ENCODE measurements at regions of chr7 and their contacts with region 1.

Region 1: DNA sequence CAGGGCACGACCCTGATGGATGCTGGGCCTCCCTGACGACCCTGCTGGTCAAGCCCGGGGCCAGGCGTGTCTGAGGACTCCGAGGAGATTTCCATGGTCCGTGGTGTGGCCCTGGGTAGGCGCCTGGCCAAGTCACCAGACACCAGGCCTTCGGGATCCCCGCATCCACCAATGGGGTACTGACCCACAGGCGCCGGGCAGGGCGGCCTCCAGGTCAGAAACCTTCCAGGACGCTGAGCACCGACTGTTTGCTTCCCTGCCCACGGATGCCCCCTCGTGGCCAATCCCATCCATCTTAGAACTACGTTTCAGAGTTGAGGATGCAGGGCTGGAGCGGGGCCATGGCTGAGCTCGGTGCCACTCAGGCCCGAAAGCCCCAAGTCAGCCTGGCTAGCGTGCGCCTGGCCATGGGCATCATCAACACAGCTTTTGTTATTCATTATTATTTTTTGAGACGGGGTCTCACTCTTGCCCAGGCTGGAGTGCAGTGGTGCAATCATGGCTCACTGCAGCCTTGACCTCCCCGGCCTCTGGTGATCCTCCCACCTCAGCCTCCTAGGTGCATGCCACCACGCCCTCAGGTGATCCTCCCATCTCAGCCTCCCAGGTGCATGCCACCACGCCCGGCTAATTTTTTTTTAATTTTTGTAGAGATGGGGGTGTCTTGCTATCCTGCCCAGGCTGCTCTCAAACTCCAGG is 7.1 kb upstream of the AMZ1 start:
- DNase-seq: peak in 3 of 4 donors; percentile 62 to 93 (median 83)
- ATAC-seq: peak; percentile 91
- H3K4me3 ChIP-seq: no peak overlapping the region
- H3K27ac ChIP-seq: no peak overlapping the region
- H3K4me1 ChIP-seq: peaks cover 0 to 5% of the 10 kb centered on the region in 2 donors
- H3K27me3 ChIP-seq: peaks cover 0 to 61% of the 10 kb centered on the region in 2 donors
- CTCF ChIP-seq: peak; percentile 70 to 80

Region 2: DNA sequence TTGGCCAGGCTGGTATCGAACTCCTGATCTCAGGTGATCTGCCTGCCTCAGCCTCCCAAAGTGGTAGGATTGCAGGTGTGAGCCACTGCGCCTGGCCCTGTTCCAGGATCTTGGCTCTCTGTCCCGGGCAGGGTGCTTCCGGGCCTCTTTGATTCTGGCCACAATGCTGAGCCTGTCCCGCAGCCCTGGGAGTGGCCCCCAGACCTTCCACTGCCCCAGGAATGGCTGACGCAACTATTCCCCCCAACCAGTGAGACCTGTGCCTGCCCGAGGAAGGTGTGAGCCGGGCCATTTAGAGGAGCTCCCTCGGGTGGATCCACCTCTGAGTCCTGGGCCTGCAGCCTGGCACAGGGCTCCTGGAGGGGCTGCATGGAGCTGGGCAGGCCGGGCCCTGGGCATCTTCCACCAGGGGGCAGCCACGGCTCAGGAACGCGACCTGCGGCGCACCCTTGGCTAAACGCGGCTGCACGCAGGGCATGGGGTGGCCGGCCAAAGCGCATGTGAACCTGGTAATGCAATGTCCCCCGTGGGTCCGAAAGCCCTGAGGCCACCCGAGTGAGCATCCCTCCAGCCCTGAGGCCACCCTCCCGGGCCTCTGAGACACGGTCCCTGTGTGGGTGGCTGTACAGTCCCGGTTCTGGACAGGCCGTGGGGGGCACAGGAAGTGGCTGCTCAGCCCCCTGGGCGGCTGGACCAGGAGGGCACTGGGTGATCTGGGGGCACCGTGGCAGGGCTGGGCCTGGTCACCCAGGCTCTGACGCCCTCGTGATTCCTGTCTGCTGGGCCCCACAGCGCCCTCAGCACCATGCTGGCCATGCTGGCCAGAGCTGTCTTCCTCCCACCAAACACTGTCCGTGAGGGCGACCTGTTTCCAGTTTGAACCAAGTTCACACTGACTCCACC is 229.5 kb before region 1 on chr7:
- intact Hi-C with region 1: loop called in 1 of 2 experiments (anchors 10 kb)
- DNase-seq: peak; percentile 67 to 98 (median 86)
- ATAC-seq: peak; percentile 98
- H3K4me3 ChIP-seq: peak overlapping the region; percentile 10 to 26
- H3K27ac ChIP-seq: no peak overlapping the region
- H3K4me1 ChIP-seq: peaks cover 7 to 22% of the 10 kb centered on the region in 2 donors
- H3K27me3 ChIP-seq: no peaks in the 10 kb centered on the region
- CTCF ChIP-seq: peak; percentile 90 to 95

Region 3: GRCh38 chr7:2567679-2568278 is 113.2 kb before region 1 on chr7:
- intact Hi-C with region 1: loop called in 1 of 2 experiments (anchors 10 kb)
- DNase-seq: peak in 2 of 4 donors; percentile 60 to 63
- ATAC-seq: peak; percentile 74
- H3K4me3 ChIP-seq: no peak overlapping the region
- H3K27ac ChIP-seq: no peak overlapping the region
- H3K4me1 ChIP-seq: peaks cover 5 to 15% of the 10 kb centered on the region in 2 donors
- H3K27me3 ChIP-seq: no peaks in the 10 kb centered on the region
- CTCF ChIP-seq: peak; percentile 23 to 25

Region 4: GRCh38 chr7:2978403-2978802 is 297.5 kb after region 1 on chr7:
- intact Hi-C with region 1: no loop called
- DNase-seq: peak; percentile 20 to 88 (median 80)
- ATAC-seq: peak; percentile 96
- H3K4me3 ChIP-seq: peak overlapping the region in 1 of 2 donors; percentile 17
- H3K27ac ChIP-seq: no peak overlapping the region
- H3K4me1 ChIP-seq: peaks cover 0 to 14% of the 10 kb centered on the region in 2 donors
- H3K27me3 ChIP-seq: peaks cover 0 to 51% of the 10 kb centered on the region in 2 donors
- CTCF ChIP-seq: no peak